Tibial artery (tissue), 4 donors: ENCODE measurements at regions of chr3 and their contacts with region 1.

Region 1: GRCh38 chr3:27134165-27134796 is 234.9 kb downstream of the NEK10 start:
- DNase-seq: peak; percentile 58 to 74
- H3K4me3 ChIP-seq: no peak overlapping the region
- H3K27ac ChIP-seq: no peak overlapping the region
- H3K4me1 ChIP-seq: peaks cover 0 to 23% (median 10%) of the 10 kb centered on the region in 4 donors
- H3K27me3 ChIP-seq: no peaks in the 10 kb centered on the region
- CTCF ChIP-seq: peak; percentile 83 to 85

Region 2: DNA sequence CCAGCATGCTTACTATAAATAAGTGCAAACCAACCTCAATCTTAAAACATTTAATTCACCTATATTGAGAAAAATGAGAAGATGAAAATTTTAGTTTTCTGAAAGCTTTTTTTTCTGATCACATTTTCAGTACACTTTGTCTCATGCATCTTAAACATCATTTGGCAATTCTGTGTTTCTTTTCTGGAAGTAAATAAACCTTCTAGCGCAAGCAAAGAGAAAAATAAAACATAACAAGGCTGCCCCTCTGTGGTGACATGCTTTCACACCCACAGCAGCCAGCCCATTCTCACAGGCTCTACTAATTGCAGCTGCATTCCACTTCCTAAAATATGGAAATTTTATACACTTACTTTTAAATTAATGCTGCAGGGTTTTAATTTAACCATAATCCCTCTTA is 144.8 kb after region 1 on chr3:
- intact Hi-C with region 1: loop called (anchors 2 kb)
- DNase-seq: no peak
- H3K4me3 ChIP-seq: no peak overlapping the region
- H3K27ac ChIP-seq: no peak overlapping the region
- H3K4me1 ChIP-seq: no peaks in the 10 kb centered on the region
- H3K27me3 ChIP-seq: no peaks in the 10 kb centered on the region
- CTCF ChIP-seq: peak; percentile 49 to 53

Region 3: DNA sequence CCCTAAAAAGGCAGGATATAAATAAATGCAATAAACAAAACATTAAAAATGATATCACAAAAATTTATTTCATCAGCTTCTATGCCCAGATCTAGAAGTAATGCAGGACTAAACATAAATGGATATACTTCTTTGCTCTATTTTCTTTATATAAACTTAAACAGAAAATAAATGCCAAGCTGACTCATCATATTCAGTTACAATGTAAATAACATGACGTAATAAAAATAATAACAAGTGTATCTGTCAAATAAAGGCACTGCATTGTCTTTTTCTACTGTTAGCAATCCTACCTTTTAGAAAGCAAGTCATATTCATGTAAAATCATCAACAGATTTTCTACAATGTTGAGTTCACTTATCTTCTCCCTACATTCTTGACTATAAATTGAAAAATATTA is 173.3 kb after region 1 on chr3:
- intact Hi-C with region 1: no loop called
- DNase-seq: no peak
- H3K4me3 ChIP-seq: no peak overlapping the region
- H3K27ac ChIP-seq: no peak overlapping the region
- H3K4me1 ChIP-seq: no peaks in the 10 kb centered on the region
- H3K27me3 ChIP-seq: no peaks in the 10 kb centered on the region
- CTCF ChIP-seq: no peak